OCI-LY7 (cell line): ENCODE measurements at regions of chr16 and their contacts with region 1.

Region 1: GRCh38 chr16:13414154-13414553 is 505.8 kb upstream of the ERCC4 start:
- DNase-seq: no peak
- H3K4me3 ChIP-seq: no peak overlapping the region
- H3K27ac ChIP-seq: no peak overlapping the region
- H3K4me1 ChIP-seq: peaks cover 5% of the 10 kb centered on the region
- CTCF ChIP-seq: no peak

Region 2: DNA sequence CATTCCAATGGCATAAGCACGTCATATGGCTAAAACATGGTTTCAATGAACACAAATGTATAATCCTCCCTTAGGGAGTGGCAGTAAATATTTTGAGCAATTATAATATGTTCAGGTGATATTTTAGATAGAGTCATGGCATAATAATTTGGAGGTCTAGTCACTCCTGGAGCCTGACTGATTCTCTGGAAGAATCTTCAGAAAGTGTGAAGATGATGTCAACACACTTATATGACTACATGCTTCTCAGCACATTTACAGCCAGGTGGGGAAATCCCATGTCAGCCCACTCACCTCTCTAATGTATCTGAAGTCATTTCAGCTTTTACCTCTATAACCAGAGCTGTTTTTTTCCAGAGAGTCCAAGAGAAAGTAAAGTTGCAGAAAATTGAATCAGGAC is 38.0 kb before region 1 on chr16:
- CTCF ChIA-PET with region 1: no interaction called
- POLR2A ChIA-PET with region 1: no interaction called
- intact Hi-C with region 1: loop called (anchors 2 kb)
- DNase-seq: no peak
- H3K4me3 ChIP-seq: no peak overlapping the region
- H3K27ac ChIP-seq: no peak overlapping the region
- H3K4me1 ChIP-seq: peaks cover 12% of the 10 kb centered on the region
- CTCF ChIP-seq: no peak

Region 3: DNA sequence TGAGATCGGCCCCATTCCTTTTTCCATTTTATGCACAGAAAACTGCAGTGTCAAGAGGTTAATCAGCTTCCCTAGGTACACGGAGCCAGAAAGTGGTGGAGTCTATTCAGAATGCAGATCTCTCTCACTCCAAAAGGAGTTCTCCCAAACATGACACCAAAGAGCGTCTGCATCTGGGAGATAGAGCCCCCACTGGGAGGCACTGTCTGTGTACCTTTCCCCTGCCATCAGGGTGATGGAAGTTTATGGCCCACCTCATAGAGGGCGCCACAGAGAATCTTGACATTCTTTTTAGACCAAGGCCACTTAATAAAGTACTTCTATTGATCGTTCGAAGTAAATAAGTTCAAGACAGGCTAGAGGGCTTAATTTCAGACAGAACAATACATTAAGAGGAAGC is 12.1 kb after region 1 on chr16:
- CTCF ChIA-PET with region 1: no interaction called
- POLR2A ChIA-PET with region 1: interaction called, 11 read pairs
- intact Hi-C with region 1: no loop called
- DNase-seq: peak; percentile 19
- H3K4me3 ChIP-seq: no peak overlapping the region
- H3K27ac ChIP-seq: no peak overlapping the region
- H3K4me1 ChIP-seq: peaks cover 46% of the 10 kb centered on the region
- CTCF ChIP-seq: peak; percentile 71

Region 4: DNA sequence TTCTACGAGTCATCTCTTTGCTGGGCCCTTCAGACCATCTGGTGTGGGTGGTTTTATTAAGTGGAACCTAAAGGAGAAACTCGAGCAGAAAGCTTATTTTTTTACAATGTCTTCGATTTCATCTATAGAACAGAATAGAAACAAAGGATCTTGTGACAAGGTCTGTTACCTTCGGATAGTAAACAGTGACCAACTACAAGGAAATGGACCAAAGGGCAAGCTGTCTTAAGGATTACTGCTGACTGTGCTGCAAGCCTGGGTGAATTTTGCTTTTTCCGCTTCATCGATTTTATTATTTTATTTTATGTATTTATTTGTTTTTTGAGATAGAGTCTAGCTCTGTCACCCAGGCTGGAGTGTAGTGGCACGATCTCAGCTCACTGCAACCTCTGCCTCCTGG is 156.9 kb after region 1 on chr16:
- CTCF ChIA-PET with region 1: no interaction called
- POLR2A ChIA-PET with region 1: no interaction called
- intact Hi-C with region 1: no loop called
- DNase-seq: no peak
- H3K4me3 ChIP-seq: no peak overlapping the region
- H3K27ac ChIP-seq: no peak overlapping the region
- H3K4me1 ChIP-seq: no peaks in the 10 kb centered on the region
- CTCF ChIP-seq: no peak